CD8-positive, alpha-beta T cell (primary cell): ENCODE measurements at regions of chr16 and their contacts with region 1.

Region 1: DNA sequence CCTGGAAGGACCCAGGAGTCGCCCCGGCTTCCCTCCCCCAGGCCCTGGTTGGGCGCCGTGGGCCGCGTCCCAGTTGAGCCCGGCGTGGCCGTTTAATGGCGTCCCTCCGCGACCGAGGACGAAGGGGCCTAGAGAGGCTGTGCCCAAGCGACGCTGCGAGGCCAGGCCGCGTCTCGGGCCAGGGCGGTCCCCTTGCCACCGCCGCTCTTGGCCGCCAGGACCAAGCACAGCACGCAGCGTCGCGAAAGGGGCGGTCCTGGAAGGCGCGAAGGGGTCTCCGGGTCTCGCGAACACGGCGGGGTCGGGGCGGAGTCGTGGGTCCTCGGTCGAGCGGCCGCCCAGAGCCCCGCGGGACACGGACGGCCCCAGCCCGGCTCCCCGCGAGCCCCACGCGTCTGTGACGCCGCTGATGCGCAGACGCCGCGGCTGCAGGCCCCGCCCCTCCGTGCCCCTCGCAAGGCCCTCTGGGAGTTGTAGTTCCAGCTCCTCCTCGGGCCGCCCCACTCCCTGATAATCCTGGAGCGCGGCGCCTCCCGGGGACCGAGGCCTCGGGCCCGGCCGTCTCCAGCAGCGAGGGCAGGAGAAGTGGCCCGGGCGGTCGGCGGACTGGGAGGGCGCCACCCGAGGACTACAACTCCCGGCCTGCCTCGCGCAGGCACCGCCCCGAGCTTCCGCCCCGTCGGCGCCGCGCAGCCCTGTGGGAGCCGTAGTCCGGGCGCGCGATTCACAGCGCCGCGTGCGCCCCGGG is at the start of gene CAPN15:
- DNase-seq: peak; percentile 71 to 93 (median 81)
- ATAC-seq: peak; percentile 81
- H3K4me3 ChIP-seq: peak within 1 kb of the TSS; percentile 80 to 91
- H3K4me3 Mint-ChIP-seq: peak within 1 kb of the TSS; percentile 86
- H3K27ac ChIP-seq: peak within 1 kb of the TSS; percentile 73 to 92
- H3K27ac Mint-ChIP-seq: peak within 1 kb of the TSS; percentile 88
- H3K4me1 ChIP-seq: peaks cover 35% of the 10 kb centered on the region
- H3K4me1 Mint-ChIP-seq: peaks cover 31% of the 10 kb centered on the region
- H3K27me3 ChIP-seq: no peaks in the 10 kb centered on the region
- H3K27me3 Mint-ChIP-seq: no peaks in the 10 kb centered on the region
- CTCF ChIP-seq: no peak
- total RNA-seq, gene CAPN15: 40.5 to 43.6 TPM

Region 2: DNA sequence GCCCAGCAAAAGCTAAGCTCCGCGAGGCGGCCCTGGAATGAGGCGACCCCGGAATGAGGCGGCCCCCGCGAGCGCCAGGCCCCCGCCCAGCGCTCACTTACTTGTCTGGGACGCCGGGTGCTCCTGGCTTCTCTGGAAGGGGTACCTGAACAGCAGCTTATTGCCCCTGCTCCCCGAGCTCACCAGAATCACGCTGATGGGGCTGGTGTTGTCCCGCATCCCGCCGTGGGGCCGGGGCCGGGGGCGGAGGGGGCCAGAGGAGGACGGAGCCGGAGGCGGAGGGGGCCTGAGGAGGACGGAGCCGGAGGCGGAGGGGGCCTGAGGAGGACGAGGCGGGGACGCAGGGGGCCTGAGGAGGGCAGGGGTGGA is 389.1 kb before region 1 on chr16:
- CTCF ChIA-PET with region 1: no interaction called
- POLR2A ChIA-PET with region 1: no interaction called
- intact Hi-C with region 1: loop called in 1 of 2 experiments (anchors 5 kb)
- DNase-seq: peak in 6 of 9 experiments; percentile 8 to 61 (median 36)
- ATAC-seq: peak; percentile 25
- H3K4me3 ChIP-seq: peak overlapping the region; percentile 58 to 75
- H3K4me3 Mint-ChIP-seq: peak overlapping the region; percentile 85
- H3K27ac ChIP-seq: peak overlapping the region; percentile 33 to 40
- H3K27ac Mint-ChIP-seq: peak overlapping the region; percentile 66
- H3K4me1 ChIP-seq: peaks cover 7% of the 10 kb centered on the region
- H3K4me1 Mint-ChIP-seq: peaks cover 34% of the 10 kb centered on the region
- H3K27me3 ChIP-seq: no peaks in the 10 kb centered on the region
- H3K27me3 Mint-ChIP-seq: no peaks in the 10 kb centered on the region
- CTCF ChIP-seq: no peak

Region 3: DNA sequence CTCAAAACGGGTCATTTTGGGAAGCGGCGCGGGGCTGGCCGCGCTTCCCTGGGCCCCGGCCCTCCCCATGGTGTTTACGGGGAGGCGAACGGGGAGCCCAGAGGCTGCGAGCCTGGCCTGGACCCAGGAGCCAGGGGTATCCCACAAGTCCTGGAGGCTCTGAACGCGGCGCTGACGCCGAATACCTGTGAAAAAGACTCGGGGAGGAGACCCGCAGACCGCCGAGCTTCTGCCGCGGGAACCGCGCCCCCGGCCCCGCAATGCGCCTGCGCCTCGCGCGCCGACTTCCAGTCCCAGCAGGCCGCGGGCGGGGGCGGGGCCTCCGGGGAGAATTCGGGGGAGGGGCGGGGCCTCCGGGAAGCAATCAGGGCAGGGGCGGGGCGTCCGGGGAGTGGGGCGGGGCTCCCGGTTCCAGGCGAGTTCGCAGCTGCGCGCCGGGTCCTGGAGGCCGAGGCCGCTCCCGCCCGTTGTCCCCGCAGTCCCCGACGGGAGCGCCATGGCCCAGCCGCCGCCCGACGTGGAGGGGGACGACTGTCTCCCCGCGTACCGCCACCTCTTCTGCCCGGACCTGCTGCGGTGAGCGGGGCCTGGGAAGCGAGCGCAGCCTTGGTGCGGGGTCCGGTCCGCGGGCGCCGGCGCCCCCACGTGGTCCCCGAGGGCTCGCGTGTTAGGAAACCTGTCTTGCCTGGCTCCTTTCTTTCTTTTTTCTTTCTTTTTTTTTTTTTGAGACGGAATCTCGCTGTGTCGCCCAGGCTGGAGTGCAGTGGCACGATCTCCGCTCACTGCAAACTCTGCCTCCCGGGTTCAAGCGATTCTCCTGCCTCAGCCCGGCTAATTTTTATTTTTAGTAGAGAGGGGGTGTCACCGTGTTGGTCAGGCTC is 125.5 kb before region 1 on chr16 and contains the start of gene DECR2:
- CTCF ChIA-PET with region 1: no interaction called
- POLR2A ChIA-PET with region 1: no interaction called
- intact Hi-C with region 1: loop called in 1 of 2 experiments (anchors 1 kb)
- DNase-seq: peak; percentile 96 to 100 (median 98)
- ATAC-seq: peak; percentile 88
- H3K4me3 ChIP-seq: peak within 1 kb of the TSS; percentile 88 to 91
- H3K4me3 Mint-ChIP-seq: peak within 1 kb of the TSS; percentile 90
- H3K27ac ChIP-seq: peak within 1 kb of the TSS; percentile 75 to 82
- H3K27ac Mint-ChIP-seq: peak within 1 kb of the TSS; percentile 98
- H3K4me1 ChIP-seq: peaks cover 11% of the 10 kb centered on the region
- H3K4me1 Mint-ChIP-seq: peaks cover 13% of the 10 kb centered on the region
- H3K27me3 ChIP-seq: no peaks in the 10 kb centered on the region
- H3K27me3 Mint-ChIP-seq: no peaks in the 10 kb centered on the region
- CTCF ChIP-seq: peak; percentile 55
- total RNA-seq, gene DECR2: 6.1 to 7.9 TPM

Region 4: GRCh38 chr16:515175-515938 is 11.8 kb before region 1 on chr16:
- CTCF ChIA-PET with region 1: no interaction called
- POLR2A ChIA-PET with region 1: no interaction called
- intact Hi-C with region 1: no loop called
- DNase-seq: no peak
- ATAC-seq: no peak
- H3K4me3 ChIP-seq: no peak overlapping the region
- H3K4me3 Mint-ChIP-seq: no peak overlapping the region
- H3K27ac ChIP-seq: no peak overlapping the region
- H3K27ac Mint-ChIP-seq: no peak overlapping the region
- H3K4me1 ChIP-seq: no peaks in the 10 kb centered on the region
- H3K4me1 Mint-ChIP-seq: no peaks in the 10 kb centered on the region
- H3K27me3 ChIP-seq: no peaks in the 10 kb centered on the region
- H3K27me3 Mint-ChIP-seq: no peaks in the 10 kb centered on the region
- CTCF ChIP-seq: no peak

Region 5: DNA sequence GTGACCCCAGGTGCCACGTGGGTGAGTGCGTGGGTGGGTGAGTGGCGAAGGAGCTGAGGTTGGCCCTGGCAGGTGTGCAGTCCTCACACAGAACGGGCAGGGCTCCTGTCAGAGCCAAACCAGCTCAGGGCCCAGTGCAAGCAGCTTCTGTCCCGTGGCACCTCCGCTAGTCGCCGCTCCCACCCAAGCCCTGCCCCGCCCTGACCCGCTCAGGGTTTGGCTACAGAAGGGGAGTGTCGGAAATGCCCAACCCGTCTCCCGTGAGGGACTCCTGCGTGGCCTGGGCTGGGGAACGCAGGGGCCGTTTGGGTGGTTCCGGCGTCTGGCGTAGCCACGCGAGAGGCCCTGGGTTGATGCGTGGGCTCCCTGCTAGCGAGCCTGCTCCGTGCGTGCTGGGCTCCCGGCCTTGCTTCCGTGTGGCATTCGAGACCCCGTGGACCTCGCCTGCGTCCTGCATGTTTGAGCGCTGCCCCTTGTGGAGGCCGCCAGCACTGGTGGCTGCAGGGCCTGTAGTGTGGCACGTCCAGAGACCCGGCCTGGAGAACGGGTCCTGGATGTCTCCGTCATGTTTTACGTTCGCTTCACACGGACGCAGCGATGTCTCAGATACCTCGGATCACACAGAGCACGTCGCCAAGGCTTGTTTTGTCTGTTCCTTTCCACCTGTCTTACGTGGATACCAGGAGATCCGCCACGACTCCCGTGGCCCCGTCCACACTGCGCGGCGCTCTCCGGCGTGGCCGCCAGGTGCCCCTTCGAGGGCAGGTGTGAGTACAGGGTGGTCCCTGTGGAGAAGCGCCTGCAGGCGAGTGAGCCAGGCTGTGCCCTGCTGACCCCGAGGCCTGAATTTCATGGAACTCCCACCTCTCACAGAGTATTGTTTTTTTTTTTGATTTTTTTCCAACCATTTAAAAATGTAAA is 10.5 kb after region 1 on chr16:
- CTCF ChIA-PET with region 1: no interaction called
- POLR2A ChIA-PET with region 1: no interaction called
- intact Hi-C with region 1: no loop called
- DNase-seq: no peak
- ATAC-seq: no peak
- H3K4me3 ChIP-seq: no peak overlapping the region
- H3K4me3 Mint-ChIP-seq: no peak overlapping the region
- H3K27ac ChIP-seq: no peak overlapping the region
- H3K27ac Mint-ChIP-seq: no peak overlapping the region
- H3K4me1 ChIP-seq: no peaks in the 10 kb centered on the region
- H3K4me1 Mint-ChIP-seq: no peaks in the 10 kb centered on the region
- H3K27me3 ChIP-seq: no peaks in the 10 kb centered on the region
- H3K27me3 Mint-ChIP-seq: no peaks in the 10 kb centered on the region
- CTCF ChIP-seq: no peak

Region 6: GRCh38 chr16:589658-590159 is 62.5 kb after region 1 on chr16 and contains the start of gene RAB40C:
- CTCF ChIA-PET with region 1: no interaction called
- POLR2A ChIA-PET with region 1: interaction called, 4 read pairs
- intact Hi-C with region 1: loop called (anchors 1 kb)
- DNase-seq: peak; percentile 98 to 100 (median 99)
- ATAC-seq: peak; percentile 81
- H3K4me3 ChIP-seq: peak within 1 kb of the TSS; percentile 70 to 98
- H3K4me3 Mint-ChIP-seq: peak within 1 kb of the TSS; percentile 95
- H3K27ac ChIP-seq: peak within 1 kb of the TSS; percentile 84 to 93
- H3K27ac Mint-ChIP-seq: peak within 1 kb of the TSS; percentile 98
- H3K4me1 ChIP-seq: peaks cover 29% of the 10 kb centered on the region
- H3K4me1 Mint-ChIP-seq: peaks cover 40% of the 10 kb centered on the region
- H3K27me3 ChIP-seq: no peaks in the 10 kb centered on the region
- H3K27me3 Mint-ChIP-seq: no peaks in the 10 kb centered on the region
- CTCF ChIP-seq: no peak
- total RNA-seq, gene RAB40C: 3.9 to 5.9 TPM

Region 7: GRCh38 chr16:667780-668518 is 140.8 kb after region 1 on chr16 and contains the start of gene RHOT2:
- CTCF ChIA-PET with region 1: no interaction called
- POLR2A ChIA-PET with region 1: no interaction called
- intact Hi-C with region 1: loop called in 1 of 2 experiments (anchors 10 kb)
- DNase-seq: peak; percentile 83 to 96 (median 92)
- ATAC-seq: peak; percentile 92
- H3K4me3 ChIP-seq: peak within 1 kb of the TSS; percentile 62 to 85
- H3K4me3 Mint-ChIP-seq: peak within 1 kb of the TSS; percentile 79
- H3K27ac ChIP-seq: peak within 1 kb of the TSS; percentile 37 to 68
- H3K27ac Mint-ChIP-seq: peak within 1 kb of the TSS; percentile 84
- H3K4me1 ChIP-seq: peaks cover 22% of the 10 kb centered on the region
- H3K4me1 Mint-ChIP-seq: peaks cover 12% of the 10 kb centered on the region
- H3K27me3 ChIP-seq: no peaks in the 10 kb centered on the region
- H3K27me3 Mint-ChIP-seq: no peaks in the 10 kb centered on the region
- CTCF ChIP-seq: peak; percentile 65
- total RNA-seq, gene RHOT2: 163 to 175 TPM

Region 8: GRCh38 chr16:788394-789126 is 261.4 kb after region 1 on chr16 and contains the start of gene CHTF18:
- CTCF ChIA-PET with region 1: no interaction called
- POLR2A ChIA-PET with region 1: no interaction called
- intact Hi-C with region 1: loop called in 1 of 2 experiments (anchors 1 kb)
- DNase-seq: peak; percentile 88 to 96 (median 92)
- ATAC-seq: peak; percentile 98
- H3K4me3 ChIP-seq: peak within 1 kb of the TSS; percentile 81 to 97
- H3K4me3 Mint-ChIP-seq: peak within 1 kb of the TSS; percentile 84
- H3K27ac ChIP-seq: peak within 1 kb of the TSS; percentile 10 to 53
- H3K27ac Mint-ChIP-seq: peak within 1 kb of the TSS; percentile 49
- H3K4me1 ChIP-seq: peaks cover 19% of the 10 kb centered on the region
- H3K4me1 Mint-ChIP-seq: peaks cover 7% of the 10 kb centered on the region
- H3K27me3 ChIP-seq: no peaks in the 10 kb centered on the region
- H3K27me3 Mint-ChIP-seq: no peaks in the 10 kb centered on the region
- CTCF ChIP-seq: no peak
- total RNA-seq, gene CHTF18: 34.4 to 38.4 TPM